Naive thymus-derived CD4-positive, alpha-beta T cell (primary cell): ENCODE measurements at regions of chr20 and their contacts with region 1.

Region 1: GRCh38 chr20:64038565-64039292 is 2.7 kb downstream of the C20orf204 start:
- DNase-seq: peak; percentile 55 to 86 (median 76)
- ATAC-seq: peak; percentile 80
- H3K4me3 ChIP-seq: peak overlapping the region; percentile 62
- H3K4me3 Mint-ChIP-seq: peak overlapping the region; percentile 18 to 89 (median 71)
- H3K27ac ChIP-seq: peak overlapping the region; percentile 57
- H3K27ac Mint-ChIP-seq: peak overlapping the region in 4 of 9 donors; percentile 28 to 92 (median 64)
- H3K4me1 ChIP-seq: peaks cover 40 to 49% of the 10 kb centered on the region in 2 donors
- H3K4me1 Mint-ChIP-seq: peaks cover 26 to 49% (median 33%) of the 10 kb centered on the region in 7 donors
- H3K27me3 ChIP-seq: no peaks in the 10 kb centered on the region
- H3K27me3 Mint-ChIP-seq: no peaks in the 10 kb centered on the region

Region 2: DNA sequence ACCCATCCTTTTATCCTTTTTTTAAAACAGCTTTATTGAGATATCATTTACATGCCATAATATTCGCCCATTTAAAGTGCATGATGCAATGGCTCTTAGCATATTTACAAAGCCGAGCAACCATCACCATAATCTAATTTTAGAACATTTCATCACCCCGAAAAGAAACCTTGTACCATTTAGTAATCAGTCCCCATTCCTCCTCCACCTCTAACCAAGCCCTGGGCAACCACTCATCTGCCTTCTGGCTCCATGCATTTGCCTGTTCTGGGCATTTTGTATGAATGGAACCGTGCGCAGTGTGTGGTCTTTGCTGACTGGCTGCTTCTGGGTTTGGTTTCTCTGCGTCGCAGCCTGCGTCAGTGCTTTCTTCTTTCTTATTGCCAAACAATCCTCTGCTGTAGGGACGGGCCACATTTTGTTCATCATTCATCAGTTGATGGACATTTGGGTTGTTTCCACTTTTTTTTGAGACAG is 529.6 kb before region 1 on chr20:
- CTCF ChIA-PET with region 1: no interaction called
- POLR2A ChIA-PET with region 1: no interaction called
- intact Hi-C with region 1: no loop called
- DNase-seq: no peak
- ATAC-seq: no peak
- H3K4me3 ChIP-seq: no peak overlapping the region
- H3K4me3 Mint-ChIP-seq: peak overlapping the region in 1 of 10 donors; percentile 14
- H3K27ac ChIP-seq: no peak overlapping the region
- H3K27ac Mint-ChIP-seq: no peak overlapping the region
- H3K4me1 ChIP-seq: no peaks in the 10 kb centered on the region
- H3K4me1 Mint-ChIP-seq: peaks cover 0 to 10% (median 0%) of the 10 kb centered on the region in 7 donors
- H3K27me3 ChIP-seq: no peaks in the 10 kb centered on the region
- H3K27me3 Mint-ChIP-seq: peaks cover 34 to 51% (median 36%) of the 10 kb centered on the region in 5 donors

Region 3: GRCh38 chr20:63594043-63594561 is 444.6 kb before region 1 on chr20:
- CTCF ChIA-PET with region 1: no interaction called
- POLR2A ChIA-PET with region 1: no interaction called
- intact Hi-C with region 1: no loop called
- DNase-seq: no peak
- ATAC-seq: no peak
- H3K4me3 ChIP-seq: no peak overlapping the region
- H3K4me3 Mint-ChIP-seq: no peak overlapping the region
- H3K27ac ChIP-seq: no peak overlapping the region
- H3K27ac Mint-ChIP-seq: no peak overlapping the region
- H3K4me1 ChIP-seq: no peaks in the 10 kb centered on the region
- H3K4me1 Mint-ChIP-seq: no peaks in the 10 kb centered on the region
- H3K27me3 ChIP-seq: no peaks in the 10 kb centered on the region
- H3K27me3 Mint-ChIP-seq: no peaks in the 10 kb centered on the region

Region 4: DNA sequence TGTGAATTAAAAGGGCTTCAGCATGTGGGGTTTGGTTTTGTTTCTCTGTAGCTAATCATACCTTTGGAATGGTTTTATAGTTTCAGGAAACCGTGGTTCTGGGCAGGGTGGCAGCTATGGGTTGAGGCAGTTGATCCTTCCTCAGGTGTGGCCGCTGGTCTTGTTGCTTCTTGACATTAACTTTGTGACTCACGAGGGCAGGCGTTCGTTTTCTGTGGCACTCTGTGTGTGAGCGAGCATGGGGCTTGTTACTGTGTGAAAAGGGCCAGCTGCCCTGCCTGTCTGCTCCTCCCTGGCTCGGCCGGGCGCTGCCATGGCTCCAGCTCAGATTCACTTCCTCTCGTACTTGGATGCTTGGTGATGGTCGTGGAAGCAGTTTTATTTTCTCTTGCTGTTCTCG is 127.6 kb before region 1 on chr20:
- CTCF ChIA-PET with region 1: interaction called, 3 read pairs
- POLR2A ChIA-PET with region 1: no interaction called
- intact Hi-C with region 1: loop called in 1 of 2 experiments (anchors 5 kb)
- DNase-seq: no peak
- ATAC-seq: peak; percentile 53
- H3K4me3 ChIP-seq: no peak overlapping the region
- H3K4me3 Mint-ChIP-seq: peak overlapping the region in 4 of 10 donors; percentile 3 to 59 (median 30)
- H3K27ac ChIP-seq: no peak overlapping the region
- H3K27ac Mint-ChIP-seq: peak overlapping the region in 6 of 9 donors; percentile 3 to 78 (median 44)
- H3K4me1 ChIP-seq: peaks cover 7 to 17% of the 10 kb centered on the region in 2 donors
- H3K4me1 Mint-ChIP-seq: peaks cover 28 to 63% (median 41%) of the 10 kb centered on the region in 7 donors
- H3K27me3 ChIP-seq: no peaks in the 10 kb centered on the region
- H3K27me3 Mint-ChIP-seq: no peaks in the 10 kb centered on the region

Region 5: DNA sequence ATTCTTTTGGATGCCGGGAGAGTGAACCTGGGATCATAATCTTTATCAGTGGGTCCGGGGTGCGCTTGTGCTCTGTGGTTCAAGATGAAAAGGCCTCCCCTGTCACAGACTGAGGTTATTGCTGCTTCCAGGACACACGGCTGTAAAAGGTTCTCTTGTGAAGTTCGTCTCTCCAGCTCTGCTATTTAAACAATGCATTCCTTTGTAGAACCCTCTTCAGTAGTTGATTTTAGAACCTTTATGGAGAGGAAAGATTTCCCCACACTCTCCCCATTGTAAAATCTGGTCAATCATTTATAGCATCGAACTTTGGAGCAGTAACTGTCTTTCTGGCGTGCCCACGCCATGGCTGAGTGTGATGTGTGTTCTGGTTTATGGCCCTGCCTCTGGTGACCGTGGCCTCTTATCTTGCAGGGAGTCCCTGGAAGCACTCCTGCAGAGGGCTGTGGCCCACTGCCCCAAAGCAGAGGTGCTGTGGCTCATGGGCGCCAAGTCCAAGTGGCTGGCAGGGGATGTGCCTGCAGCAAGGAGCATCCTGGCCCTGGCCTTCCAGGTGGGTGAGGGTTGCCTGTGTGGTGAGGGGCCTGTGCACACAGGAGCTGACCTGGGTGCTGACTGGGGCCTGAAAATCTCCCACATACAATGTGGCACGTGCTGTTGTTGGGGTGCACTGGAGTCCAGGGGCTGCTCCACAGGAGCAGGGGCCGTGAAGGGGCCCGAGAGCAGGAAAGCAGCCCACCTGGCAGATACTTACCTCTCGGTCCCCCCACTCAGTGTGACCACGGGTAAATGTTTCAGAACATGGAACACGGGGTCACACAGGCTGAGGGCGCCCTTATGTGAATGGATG is 14.4 kb before region 1 on chr20:
- CTCF ChIA-PET with region 1: interaction called, 3 read pairs
- POLR2A ChIA-PET with region 1: interaction called, 6 read pairs
- intact Hi-C with region 1: loop called in 1 of 2 experiments (anchors 2 kb)
- DNase-seq: no peak
- ATAC-seq: no peak
- H3K4me3 ChIP-seq: no peak overlapping the region
- H3K4me3 Mint-ChIP-seq: no peak overlapping the region
- H3K27ac ChIP-seq: no peak overlapping the region
- H3K27ac Mint-ChIP-seq: peak overlapping the region in 1 of 9 donors; percentile 20
- H3K4me1 ChIP-seq: no peaks in the 10 kb centered on the region
- H3K4me1 Mint-ChIP-seq: peaks cover 0 to 12% (median 3%) of the 10 kb centered on the region in 7 donors
- H3K27me3 ChIP-seq: no peaks in the 10 kb centered on the region
- H3K27me3 Mint-ChIP-seq: no peaks in the 10 kb centered on the region

Region 6: DNA sequence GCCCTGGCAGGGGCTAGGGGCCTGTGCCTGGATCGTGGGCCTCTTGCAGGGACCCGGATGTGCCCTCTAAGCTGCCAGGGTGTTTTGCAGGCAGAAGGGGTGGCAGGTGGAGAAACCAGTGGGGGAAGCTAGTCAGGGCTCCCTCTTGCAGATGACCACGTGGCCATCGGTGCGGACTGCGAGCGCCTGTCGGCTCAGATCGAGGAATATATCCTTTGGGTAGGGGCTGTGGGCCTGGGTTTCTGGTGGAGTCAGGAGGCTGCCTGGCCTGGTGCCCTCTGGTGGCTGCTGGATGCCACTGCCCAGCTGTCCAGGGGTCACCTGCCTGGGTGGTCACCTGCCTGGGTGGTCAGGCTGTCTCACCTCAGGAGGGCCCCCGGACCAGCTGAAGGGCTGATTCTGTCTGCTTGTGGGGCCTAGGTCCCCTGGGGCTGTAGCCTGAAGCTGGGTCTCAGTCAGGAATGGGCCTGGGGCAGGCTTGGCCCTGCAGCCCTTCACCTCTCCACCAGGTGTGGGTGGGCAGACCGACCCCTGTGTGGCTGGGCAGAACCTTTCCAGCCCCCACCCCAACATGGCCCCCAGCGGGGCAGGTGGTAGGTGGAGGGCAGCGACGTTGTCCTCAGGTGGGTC is 31.0 kb after region 1 on chr20:
- CTCF ChIA-PET with region 1: interaction called, 3 read pairs
- POLR2A ChIA-PET with region 1: interaction called, 4 read pairs
- intact Hi-C with region 1: loop called in 1 of 2 experiments (anchors 1 kb)
- DNase-seq: no peak
- ATAC-seq: no peak
- H3K4me3 ChIP-seq: no peak overlapping the region
- H3K4me3 Mint-ChIP-seq: no peak overlapping the region
- H3K27ac ChIP-seq: peak overlapping the region; percentile 5
- H3K27ac Mint-ChIP-seq: no peak overlapping the region
- H3K4me1 ChIP-seq: peaks cover 23 to 36% of the 10 kb centered on the region in 2 donors
- H3K4me1 Mint-ChIP-seq: peaks cover 23 to 44% (median 34%) of the 10 kb centered on the region in 7 donors
- H3K27me3 ChIP-seq: no peaks in the 10 kb centered on the region
- H3K27me3 Mint-ChIP-seq: no peaks in the 10 kb centered on the region

Region 7: GRCh38 chr20:64119681-64120341 is 81.1 kb after region 1 on chr20:
- CTCF ChIA-PET with region 1: interaction called, 32 read pairs
- POLR2A ChIA-PET with region 1: interaction called, 18 read pairs
- intact Hi-C with region 1: loop called (anchors 1 kb)
- DNase-seq: peak in 3 of 9 donors; percentile 2 to 24 (median 14)
- ATAC-seq: peak; percentile 18
- H3K4me3 ChIP-seq: peak overlapping the region; percentile 36
- H3K4me3 Mint-ChIP-seq: peak overlapping the region; percentile 39 to 80 (median 73)
- H3K27ac ChIP-seq: peak overlapping the region; percentile 22
- H3K27ac Mint-ChIP-seq: peak overlapping the region; percentile 69 to 85 (median 78)
- H3K4me1 ChIP-seq: peaks cover 5 to 9% of the 10 kb centered on the region in 2 donors
- H3K4me1 Mint-ChIP-seq: peaks cover 0 to 10% (median 8%) of the 10 kb centered on the region in 7 donors
- H3K27me3 ChIP-seq: no peaks in the 10 kb centered on the region
- H3K27me3 Mint-ChIP-seq: peaks cover 0 to 28% (median 0%) of the 10 kb centered on the region in 5 donors

Region 8: DNA sequence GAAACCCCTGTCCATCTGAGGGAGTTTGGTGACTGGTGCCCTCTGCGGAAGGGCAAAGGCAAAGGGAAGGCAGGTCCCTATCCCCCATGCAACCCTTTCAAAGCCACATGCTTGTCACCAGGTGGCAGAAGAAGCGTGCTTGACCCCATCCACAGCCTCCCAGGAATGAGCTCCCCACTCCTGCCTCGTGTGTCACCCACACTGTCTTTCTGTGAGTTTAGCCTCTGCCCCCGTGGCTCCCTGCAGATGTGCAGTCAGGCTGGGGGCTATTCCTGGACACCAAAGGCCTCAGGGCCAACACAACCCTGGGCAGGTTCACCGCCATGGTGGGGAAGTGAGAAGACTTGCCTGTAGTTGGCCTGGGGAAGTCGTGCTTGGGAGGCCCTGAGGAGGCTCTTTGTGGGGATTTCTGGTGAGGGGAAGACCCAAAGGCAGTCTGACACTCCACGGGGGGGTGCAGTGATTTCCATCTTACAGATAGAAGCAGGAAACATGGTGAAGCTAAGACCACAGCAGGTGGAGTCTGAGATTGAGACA is 200.2 kb after region 1 on chr20:
- CTCF ChIA-PET with region 1: no interaction called
- POLR2A ChIA-PET with region 1: no interaction called
- intact Hi-C with region 1: no loop called
- DNase-seq: no peak
- ATAC-seq: no peak
- H3K4me3 ChIP-seq: no peak overlapping the region
- H3K4me3 Mint-ChIP-seq: no peak overlapping the region
- H3K27ac ChIP-seq: no peak overlapping the region
- H3K27ac Mint-ChIP-seq: no peak overlapping the region
- H3K4me1 ChIP-seq: no peaks in the 10 kb centered on the region
- H3K4me1 Mint-ChIP-seq: peaks cover 0 to 7% (median 3%) of the 10 kb centered on the region in 7 donors
- H3K27me3 ChIP-seq: no peaks in the 10 kb centered on the region
- H3K27me3 Mint-ChIP-seq: peaks cover 0 to 7% (median 3%) of the 10 kb centered on the region in 5 donors